ENCODE measurements at regions of chr5 and their contacts with region 1.

Region 1: DNA sequence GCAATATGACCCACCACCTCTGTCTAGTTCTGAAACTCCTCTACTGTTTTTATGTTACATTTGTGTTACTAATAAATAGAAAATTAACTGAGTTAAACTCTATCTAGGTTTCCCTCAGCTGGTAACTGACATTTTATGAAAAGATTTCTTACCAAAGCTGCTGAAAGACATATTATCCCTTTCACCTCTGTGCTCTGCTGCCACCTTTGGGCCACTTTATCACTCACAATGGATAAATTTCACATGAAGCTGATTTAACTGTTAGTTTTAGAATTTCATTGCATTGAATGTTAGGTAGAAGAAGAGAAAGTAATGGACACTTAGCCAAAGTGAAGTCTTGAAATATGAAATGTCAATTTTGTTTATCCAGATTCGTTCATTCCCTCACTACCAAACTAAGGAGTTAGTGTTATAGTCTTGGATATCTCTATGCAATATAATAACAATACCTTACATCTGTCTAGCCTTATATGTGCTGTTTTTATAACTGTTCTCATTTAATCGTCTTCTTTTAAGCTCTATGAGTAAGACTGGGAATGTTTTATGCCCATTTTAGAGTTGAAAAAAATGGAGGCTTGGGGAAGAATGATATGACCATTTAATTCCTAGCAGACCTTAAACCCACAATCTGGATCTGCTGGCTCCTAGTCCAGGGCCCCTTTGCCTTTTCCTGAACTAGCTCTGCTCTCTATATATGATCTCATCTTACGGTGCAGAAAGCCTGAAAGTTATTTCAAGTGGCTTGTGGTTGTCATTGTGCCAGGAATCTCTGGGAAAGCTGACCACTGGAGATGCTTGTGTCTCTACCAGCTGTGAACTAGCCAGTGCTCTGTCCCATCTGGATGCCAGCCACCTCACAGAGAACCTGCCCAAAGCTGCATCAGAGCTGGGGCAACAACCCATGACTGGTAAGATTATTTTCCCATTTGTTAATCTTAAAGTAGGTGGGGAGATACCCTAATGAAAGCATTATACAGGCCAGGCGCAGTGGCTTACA is 97.1 kb downstream of the GOLPH3 start:
- DNase-seq: peak; percentile 71
- ATAC-seq: peak; percentile 49
- H3K4me3 Mint-ChIP-seq: no peak overlapping the region
- H3K27ac Mint-ChIP-seq: no peak overlapping the region
- H3K4me1 Mint-ChIP-seq: no peaks in the 10 kb centered on the region
- H3K27me3 Mint-ChIP-seq: no peaks in the 10 kb centered on the region

Region 2: DNA sequence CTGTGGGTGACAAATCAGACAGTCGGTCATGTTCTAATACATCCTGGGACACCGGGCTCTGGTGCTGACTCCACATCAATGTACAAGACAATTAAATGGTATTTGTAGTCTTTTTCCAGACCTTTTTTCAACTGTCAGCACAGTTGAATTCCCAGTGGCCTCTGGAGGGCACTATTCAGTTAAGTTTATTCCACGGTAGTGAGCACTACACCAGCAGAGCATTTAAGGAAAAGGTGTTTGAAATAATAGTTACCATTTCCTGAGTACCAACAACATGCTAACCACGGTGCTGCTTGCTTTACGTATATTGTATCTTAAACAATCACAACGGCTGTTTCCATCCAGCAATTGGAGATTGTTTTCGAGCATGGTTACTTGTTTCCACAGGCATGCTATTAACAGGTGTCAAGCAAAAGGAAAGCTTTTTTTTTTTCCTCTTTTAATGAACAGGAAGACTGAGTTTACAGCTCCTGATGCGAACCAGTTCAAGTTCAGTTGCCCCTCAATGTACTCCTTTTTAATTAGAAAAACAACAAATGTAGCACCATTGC is 251.4 kb before region 1 on chr5:
- CTCF ChIA-PET with region 1: interaction called, 26 read pairs
- POLR2A ChIA-PET with region 1: no interaction called
- intact Hi-C with region 1: loop called (anchors 1 kb)
- DNase-seq: peak; percentile 65
- ATAC-seq: peak; percentile 90
- H3K4me3 Mint-ChIP-seq: no peak overlapping the region
- H3K27ac Mint-ChIP-seq: no peak overlapping the region
- H3K4me1 Mint-ChIP-seq: peaks cover 6% of the 10 kb centered on the region
- H3K27me3 Mint-ChIP-seq: peaks cover 3% of the 10 kb centered on the region

Region 3: GRCh38 chr5:31934156-31934555 is 142.8 kb before region 1 on chr5:
- CTCF ChIA-PET with region 1: interaction called, 6 read pairs
- POLR2A ChIA-PET with region 1: no interaction called
- intact Hi-C with region 1: loop called (anchors 2 to 10 kb)
- DNase-seq: no peak
- ATAC-seq: no peak
- H3K4me3 Mint-ChIP-seq: no peak overlapping the region
- H3K27ac Mint-ChIP-seq: no peak overlapping the region
- H3K4me1 Mint-ChIP-seq: no peaks in the 10 kb centered on the region
- H3K27me3 Mint-ChIP-seq: no peaks in the 10 kb centered on the region

Region 4: DNA sequence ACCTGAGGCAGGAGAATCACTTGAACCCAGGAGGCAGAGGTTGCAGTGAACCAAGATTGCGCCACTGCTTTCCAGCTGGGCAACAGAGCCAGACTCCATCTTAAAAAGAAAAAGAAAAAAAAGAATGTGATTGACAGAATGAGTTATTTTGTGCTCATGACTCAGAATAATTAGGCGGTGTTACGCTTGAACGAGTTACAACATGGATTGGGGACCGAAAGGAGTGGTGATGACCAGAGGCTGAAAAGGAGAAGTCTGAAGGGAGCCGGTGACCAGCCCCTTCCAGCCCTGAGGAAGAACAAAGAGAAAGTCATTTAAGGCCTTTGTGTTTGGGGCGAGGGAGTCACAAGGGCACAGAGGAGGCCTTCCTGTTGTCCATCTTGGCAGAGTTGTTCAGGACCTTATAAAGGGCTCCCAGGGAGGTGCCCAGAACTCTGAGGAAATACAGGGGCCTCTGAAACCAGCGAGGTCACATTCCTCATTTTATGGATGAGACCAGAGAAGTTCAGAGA is 34.5 kb before region 1 on chr5:
- CTCF ChIA-PET with region 1: interaction called, 7 read pairs
- POLR2A ChIA-PET with region 1: no interaction called
- intact Hi-C with region 1: loop called in 1 of 2 experiments (anchors 1 kb)
- DNase-seq: no peak
- ATAC-seq: no peak
- H3K4me3 Mint-ChIP-seq: no peak overlapping the region
- H3K27ac Mint-ChIP-seq: no peak overlapping the region
- H3K4me1 Mint-ChIP-seq: no peaks in the 10 kb centered on the region
- H3K27me3 Mint-ChIP-seq: no peaks in the 10 kb centered on the region